ENCODE measurements at regions of chr3 and their contacts with region 1.

Region 1: GRCh38 chr3:141000027-141000663 is 51.0 kb upstream of the SPSB4 start:
- DNase-seq: peak; percentile 60
- H3K4me3 ChIP-seq: no peak overlapping the region; a peak in 1 of 4 replicates
- H3K27ac ChIP-seq: no peak overlapping the region
- H3K4me1 ChIP-seq: no peaks in the 10 kb centered on the region
- H3K27me3 ChIP-seq: no peaks in the 10 kb centered on the region
- CTCF ChIP-seq: peak; percentile 55
- EP300 ChIP-seq: no peak
- RAD21 ChIP-seq: peak; percentile 90

Region 2: DNA sequence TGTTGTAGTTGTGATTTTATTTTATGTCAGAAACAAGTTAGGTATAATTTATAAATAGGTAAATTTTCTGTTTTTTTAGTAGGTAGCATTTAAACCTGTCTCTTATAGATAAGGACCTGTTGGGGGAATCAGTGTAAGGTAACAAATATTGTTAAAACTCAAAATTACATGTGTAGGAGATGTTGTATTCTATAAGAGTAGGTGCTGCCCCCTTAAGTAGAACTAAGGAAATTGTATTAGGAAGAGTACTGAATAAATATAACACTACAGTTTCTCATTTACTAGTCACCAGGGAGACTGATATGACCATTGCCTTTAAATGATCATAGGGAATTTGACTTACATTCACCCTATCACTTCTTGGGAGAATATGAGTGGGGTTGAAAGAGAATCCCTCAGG is 27.3 kb before region 1 on chr3:
- CTCF ChIA-PET with region 1: interaction called, 10 read pairs
- POLR2A ChIA-PET with region 1: no interaction called
- DNase-seq: no peak
- H3K4me3 ChIP-seq: no peak overlapping the region
- H3K27ac ChIP-seq: no peak overlapping the region
- H3K4me1 ChIP-seq: no peaks in the 10 kb centered on the region
- H3K27me3 ChIP-seq: no peaks in the 10 kb centered on the region
- CTCF ChIP-seq: peak; percentile 65
- EP300 ChIP-seq: no peak
- RAD21 ChIP-seq: peak; percentile 40

Region 3: DNA sequence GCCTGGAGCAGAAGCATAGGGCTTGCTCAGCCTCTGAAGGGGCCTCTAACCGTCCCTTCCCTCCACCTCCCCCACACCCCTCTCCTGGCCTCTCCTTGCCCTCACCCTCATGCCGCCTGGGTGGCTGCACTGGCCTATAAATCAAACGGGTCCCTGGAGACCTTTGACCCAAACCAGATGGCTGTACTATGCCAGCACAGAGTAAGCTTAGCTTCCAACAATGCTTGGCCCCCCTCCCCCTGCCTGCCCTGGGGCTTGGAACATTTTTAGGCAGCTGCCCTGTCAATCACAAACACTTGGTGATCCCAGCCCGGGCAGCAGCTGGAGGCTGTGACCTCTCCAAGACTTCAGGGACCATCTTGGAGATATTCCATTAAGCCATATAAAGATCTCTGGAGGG is 84.1 kb after region 1 on chr3:
- CTCF ChIA-PET with region 1: interaction called, 14 read pairs
- POLR2A ChIA-PET with region 1: no interaction called
- DNase-seq: peak; percentile 51
- H3K4me3 ChIP-seq: no peak overlapping the region
- H3K27ac ChIP-seq: no peak overlapping the region; a peak in 1 of 4 replicates
- H3K4me1 ChIP-seq: peaks cover 0 to 49% of the 10 kb centered on the region in 2 experiments; a peak in 1 of 4 replicates
- H3K27me3 ChIP-seq: no peaks in the 10 kb centered on the region
- CTCF ChIP-seq: no peak
- EP300 ChIP-seq: no peak; a peak in 1 of 4 replicates
- RAD21 ChIP-seq: no peak

Region 4: DNA sequence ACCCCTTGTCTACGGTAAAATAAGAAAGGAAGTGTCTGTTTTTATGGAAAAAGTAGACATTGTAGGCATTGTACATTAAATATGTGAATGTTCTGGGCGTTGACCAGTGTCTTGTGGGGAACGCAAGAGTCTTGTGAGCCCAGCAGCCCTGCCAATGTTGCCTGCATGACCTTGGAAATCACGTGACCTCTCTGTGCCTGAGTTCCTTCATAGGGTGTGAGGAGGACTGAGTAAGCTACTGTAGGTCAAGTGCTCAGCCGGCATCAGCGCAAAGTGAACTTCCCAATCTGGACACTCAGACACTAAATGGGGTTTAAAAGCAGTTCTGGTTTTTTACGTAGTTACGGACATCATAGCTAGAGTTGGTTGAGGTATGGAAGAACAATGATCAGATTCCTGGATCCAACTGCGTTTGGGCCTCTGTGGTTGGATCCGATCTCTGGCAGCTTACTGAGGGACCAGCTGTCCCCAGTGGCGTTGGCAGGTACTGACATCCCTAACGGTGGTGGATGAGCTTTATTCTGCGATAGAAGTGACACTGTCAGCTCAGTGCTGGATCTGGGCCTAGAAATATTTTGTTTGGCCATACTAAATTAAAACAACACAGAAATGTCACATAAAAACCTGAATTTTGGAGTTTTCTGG is 114.8 kb after region 1 on chr3:
- CTCF ChIA-PET with region 1: interaction called, 10 read pairs
- POLR2A ChIA-PET with region 1: no interaction called
- DNase-seq: peak; percentile 50
- H3K4me3 ChIP-seq: no peak overlapping the region
- H3K27ac ChIP-seq: no peak overlapping the region
- H3K4me1 ChIP-seq: no peaks in the 10 kb centered on the region
- H3K27me3 ChIP-seq: no peaks in the 10 kb centered on the region
- CTCF ChIP-seq: peak; percentile 28; the same call in 1 of the 2 replicates
- EP300 ChIP-seq: no peak
- RAD21 ChIP-seq: peak; percentile 13; the same call in 1 of the 2 replicates

Region 5: DNA sequence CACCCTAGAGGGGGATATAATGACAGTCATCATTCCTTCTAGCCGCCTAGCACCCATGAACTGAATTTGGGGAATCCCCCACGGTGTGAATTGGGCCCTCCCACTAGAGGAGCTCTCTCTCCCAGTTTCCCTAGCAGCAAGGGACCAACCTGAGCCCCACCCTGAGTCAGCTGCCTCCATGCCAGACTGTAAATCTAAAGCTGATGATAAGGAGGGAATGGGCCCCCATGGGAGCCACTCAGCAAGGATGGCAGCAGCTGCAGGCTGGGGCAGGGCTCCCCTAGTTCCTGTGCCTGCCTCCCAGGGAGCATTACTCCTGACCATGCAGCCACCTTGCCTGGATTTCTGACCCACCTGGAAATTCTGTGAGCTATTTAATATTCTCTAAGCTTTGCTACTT is 174.5 kb after region 1 on chr3:
- CTCF ChIA-PET with region 1: interaction called, 11 read pairs
- POLR2A ChIA-PET with region 1: no interaction called
- DNase-seq: no peak
- H3K4me3 ChIP-seq: no peak overlapping the region
- H3K27ac ChIP-seq: no peak overlapping the region
- H3K4me1 ChIP-seq: no peaks in the 10 kb centered on the region
- H3K27me3 ChIP-seq: no peaks in the 10 kb centered on the region
- CTCF ChIP-seq: no peak
- EP300 ChIP-seq: no peak
- RAD21 ChIP-seq: no peak

Region 6: DNA sequence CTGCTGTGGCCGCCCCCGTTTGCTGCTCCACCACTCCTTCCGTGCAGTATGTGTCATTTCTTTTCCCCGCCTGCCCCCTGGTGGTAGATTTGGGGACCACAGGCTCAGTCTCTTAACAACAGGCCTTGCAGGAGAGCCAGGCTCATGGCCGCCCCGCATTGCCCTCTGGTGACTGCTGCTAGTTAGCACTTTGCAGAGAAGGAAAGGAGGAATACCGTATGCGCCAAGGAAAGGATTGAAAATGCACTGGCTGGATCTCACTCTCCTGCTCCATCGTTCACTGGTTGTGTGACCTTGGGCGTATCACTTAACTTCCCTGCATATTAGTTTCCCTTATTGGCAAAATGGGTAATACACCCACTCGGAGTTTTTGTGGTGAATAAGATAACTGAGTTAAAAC is 192.2 kb after region 1 on chr3:
- CTCF ChIA-PET with region 1: interaction called, 134 read pairs
- POLR2A ChIA-PET with region 1: no interaction called
- DNase-seq: peak; percentile 75
- H3K4me3 ChIP-seq: peak overlapping the region in 1 of 2 experiments; percentile 44; a peak in 1 of 4 replicates
- H3K27ac ChIP-seq: no peak overlapping the region
- H3K4me1 ChIP-seq: no peaks in the 10 kb centered on the region; a peak in 1 of 4 replicates
- H3K27me3 ChIP-seq: no peaks in the 10 kb centered on the region
- CTCF ChIP-seq: peak; percentile 98
- EP300 ChIP-seq: no peak
- RAD21 ChIP-seq: peak; percentile 98

Region 7: DNA sequence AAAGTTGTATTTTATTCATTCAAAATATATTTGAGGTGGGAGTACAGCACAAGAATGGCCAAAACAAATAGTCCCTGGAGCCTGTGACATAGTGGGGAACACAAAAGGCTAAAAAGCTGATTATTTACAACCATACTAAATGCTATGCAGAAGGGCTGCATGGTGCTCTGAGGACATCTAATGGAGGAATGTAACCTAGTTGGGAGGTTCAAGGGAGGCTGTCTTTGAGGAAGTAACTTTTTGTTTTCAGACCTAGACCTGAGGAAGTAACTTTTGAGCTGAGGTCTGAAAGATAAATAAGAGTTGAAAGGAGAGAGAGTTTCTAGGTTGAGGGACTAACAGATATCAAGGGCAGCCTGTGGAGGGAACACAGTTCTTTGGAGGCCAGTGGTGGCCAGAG is 451.9 kb after region 1 on chr3:
- CTCF ChIA-PET with region 1: no interaction called
- POLR2A ChIA-PET with region 1: no interaction called
- DNase-seq: no peak
- H3K4me3 ChIP-seq: no peak overlapping the region
- H3K27ac ChIP-seq: no peak overlapping the region
- H3K4me1 ChIP-seq: peaks cover 4 to 16% of the 10 kb centered on the region in 2 experiments; a peak in 2 of 4 replicates
- H3K27me3 ChIP-seq: no peaks in the 10 kb centered on the region
- CTCF ChIP-seq: peak; percentile 80
- EP300 ChIP-seq: no peak
- RAD21 ChIP-seq: peak; percentile 84

Measured in SK-N-SH (cell line).